Mammary epithelial cell (primary cell): ENCODE measurements at regions of chr1 and their contacts with region 1.

Region 1: GRCh38 chr1:96708482-96708881 is 13.1 kb upstream of the PTBP2 start:
- DNase-seq: no peak
- H3K4me3 ChIP-seq: no peak overlapping the region
- H3K27ac ChIP-seq: no peak overlapping the region
- H3K4me1 ChIP-seq: no peaks in the 10 kb centered on the region
- H3K27me3 ChIP-seq: no peaks in the 10 kb centered on the region
- CTCF ChIP-seq: no peak

Region 2: DNA sequence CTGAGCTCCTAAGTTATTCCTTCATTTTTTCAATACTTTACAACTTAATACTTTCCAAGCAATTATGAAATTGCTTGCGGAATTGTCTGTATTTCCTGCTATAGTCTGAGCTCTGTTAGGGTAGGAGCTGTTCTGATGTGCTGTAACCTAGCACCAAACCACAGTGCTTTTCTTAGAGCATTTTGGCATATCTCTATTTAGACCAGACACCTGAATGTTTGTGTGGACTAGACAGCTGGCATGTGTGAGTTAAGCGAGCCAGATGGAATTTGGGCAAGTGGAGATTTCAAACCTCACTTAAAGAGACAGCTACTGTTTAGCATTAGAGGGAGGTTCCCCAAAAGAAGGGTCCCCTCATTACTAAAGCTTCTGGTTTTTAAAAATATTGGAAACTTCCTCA is 1368.4 kb before region 1 on chr1:
- CTCF ChIA-PET with region 1: no interaction called
- dilution Hi-C with region 1: no loop called
- in situ Hi-C with region 1: no loop called
- intact Hi-C with region 1: no loop called
- DNase-seq: no peak
- H3K4me3 ChIP-seq: no peak overlapping the region
- H3K27ac ChIP-seq: no peak overlapping the region
- H3K4me1 ChIP-seq: no peaks in the 10 kb centered on the region
- H3K27me3 ChIP-seq: peaks cover 7% of the 10 kb centered on the region
- CTCF ChIP-seq: no peak

Region 3: DNA sequence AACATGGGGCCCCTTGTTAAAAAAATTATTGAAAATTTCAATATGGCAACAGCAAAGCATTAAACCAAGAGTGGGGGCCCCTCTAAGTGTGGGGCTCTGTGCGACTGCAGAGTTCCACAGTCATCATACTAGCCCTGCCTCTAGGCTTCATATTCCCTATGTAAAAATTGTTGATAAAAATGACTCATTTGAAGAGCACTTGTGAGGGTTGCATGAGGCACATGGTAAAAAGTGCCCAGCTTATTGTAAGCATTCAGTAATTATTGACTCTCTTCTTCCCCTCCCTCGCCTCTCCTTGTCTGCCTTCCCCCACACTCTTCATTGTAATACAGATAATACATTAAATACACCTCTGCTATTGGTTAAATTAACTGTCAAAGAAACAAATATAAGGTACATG is 73.6 kb before region 1 on chr1:
- CTCF ChIA-PET with region 1: no interaction called
- dilution Hi-C with region 1: no loop called
- in situ Hi-C with region 1: no loop called
- intact Hi-C with region 1: loop called (anchors 5 kb)
- DNase-seq: no peak
- H3K4me3 ChIP-seq: no peak overlapping the region
- H3K27ac ChIP-seq: no peak overlapping the region
- H3K4me1 ChIP-seq: no peaks in the 10 kb centered on the region
- H3K27me3 ChIP-seq: no peaks in the 10 kb centered on the region
- CTCF ChIP-seq: no peak